CD14-positive monocyte (primary cell): ENCODE measurements at regions of chr17 and their contacts with region 1.

Region 1: GRCh38 chr17:33164169-33164881 is 128.8 kb downstream of the ASIC2 start:
- DNase-seq: no peak
- H3K4me3 ChIP-seq: no peak overlapping the region
- H3K4me3 Mint-ChIP-seq: no peak overlapping the region
- H3K27ac ChIP-seq: no peak overlapping the region
- H3K27ac Mint-ChIP-seq: no peak overlapping the region
- H3K4me1 ChIP-seq: no peaks in the 10 kb centered on the region
- H3K4me1 Mint-ChIP-seq: no peaks in the 10 kb centered on the region
- H3K27me3 ChIP-seq: no peaks in the 10 kb centered on the region
- H3K27me3 Mint-ChIP-seq: peaks cover 0 to 8% (median 7%) of the 10 kb centered on the region in 3 donors
- CTCF ChIP-seq: no peak

Region 2: GRCh38 chr17:32588982-32589381 is 575.3 kb before region 1 on chr17:
- intact Hi-C with region 1: no loop called
- DNase-seq: no peak
- H3K4me3 ChIP-seq: no peak overlapping the region
- H3K4me3 Mint-ChIP-seq: no peak overlapping the region
- H3K27ac ChIP-seq: no peak overlapping the region
- H3K27ac Mint-ChIP-seq: no peak overlapping the region
- H3K4me1 ChIP-seq: no peaks in the 10 kb centered on the region
- H3K4me1 Mint-ChIP-seq: no peaks in the 10 kb centered on the region
- H3K27me3 ChIP-seq: no peaks in the 10 kb centered on the region
- H3K27me3 Mint-ChIP-seq: peaks cover 2 to 5% (median 2%) of the 10 kb centered on the region in 3 donors
- CTCF ChIP-seq: no peak

Region 3: DNA sequence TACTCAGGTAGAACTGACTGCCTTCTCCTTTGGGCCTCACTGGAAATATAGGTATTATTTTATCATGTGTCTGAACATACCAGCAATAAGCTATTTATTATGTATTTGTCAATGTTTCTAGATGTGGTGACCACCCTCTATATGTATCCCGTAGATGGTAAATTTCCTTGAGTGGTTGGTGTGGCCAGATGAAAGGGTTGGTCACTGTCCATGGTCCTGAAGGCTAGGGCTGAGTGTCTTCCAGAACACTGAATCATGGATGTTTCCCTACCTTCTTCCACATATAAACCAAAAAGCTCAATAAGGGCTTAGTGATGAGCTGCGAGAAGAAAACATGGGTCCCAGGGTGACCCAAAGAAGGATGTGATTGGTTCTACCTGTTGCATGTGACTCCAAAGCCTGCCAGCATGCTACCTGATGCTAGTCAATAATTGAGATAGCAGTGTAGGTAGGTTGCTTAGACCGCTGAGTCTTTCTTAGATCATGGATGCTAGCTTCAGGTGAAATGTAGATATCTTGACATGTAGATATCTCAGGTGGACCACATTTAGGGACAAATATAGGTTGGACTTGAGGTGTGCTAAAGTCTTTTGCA is 21.5 kb before region 1 on chr17:
- intact Hi-C with region 1: loop called in 1 of 2 experiments (anchors 1 kb)
- DNase-seq: no peak
- H3K4me3 ChIP-seq: no peak overlapping the region
- H3K4me3 Mint-ChIP-seq: no peak overlapping the region
- H3K27ac ChIP-seq: no peak overlapping the region
- H3K27ac Mint-ChIP-seq: no peak overlapping the region
- H3K4me1 ChIP-seq: no peaks in the 10 kb centered on the region
- H3K4me1 Mint-ChIP-seq: no peaks in the 10 kb centered on the region
- H3K27me3 ChIP-seq: no peaks in the 10 kb centered on the region
- H3K27me3 Mint-ChIP-seq: peaks cover 0 to 4% (median 1%) of the 10 kb centered on the region in 3 donors
- CTCF ChIP-seq: no peak